Activated CD4-positive, alpha-beta memory T cell treated with anti-CD3 and anti-CD28 coated beads, Interleukin-2, amount 10 ng/mL, durations not matched to agents 7 days and 5 days (primary cell): ENCODE measurements at regions of chr10 and their contacts with region 1.

Region 1: GRCh38 chr10:80713398-80713928 is 175.8 kb downstream of the SH2D4B start:
- DNase-seq: no peak
- H3K4me3 Mint-ChIP-seq: no peak overlapping the region
- H3K27ac Mint-ChIP-seq: no peak overlapping the region
- H3K4me1 Mint-ChIP-seq: no peaks in the 10 kb centered on the region
- H3K27me3 Mint-ChIP-seq: peaks cover 2% of the 10 kb centered on the region

Region 2: DNA sequence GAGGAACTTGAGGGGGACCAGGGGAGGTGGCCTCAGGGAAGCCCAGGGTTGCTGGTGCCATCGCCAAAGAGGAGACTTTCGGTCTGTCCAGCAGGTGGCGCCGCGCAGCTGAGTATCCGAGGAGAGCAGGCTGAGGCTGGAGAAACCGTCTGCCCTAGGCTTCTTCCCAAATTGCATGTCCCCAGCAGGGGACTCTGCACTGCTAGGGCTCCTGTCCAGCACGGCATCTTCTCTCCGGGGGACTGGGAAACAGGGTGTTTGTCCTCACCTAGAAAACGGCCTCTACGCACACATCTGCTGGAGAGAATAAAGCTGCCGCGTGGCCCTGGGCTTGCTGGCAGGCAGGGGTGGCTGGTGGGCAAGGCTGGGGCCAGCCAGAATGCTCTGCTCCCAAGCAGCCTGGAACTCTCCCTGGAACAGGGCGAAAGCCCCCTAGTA is 13.8 kb before region 1 on chr10:
- CTCF ChIA-PET with region 1: interaction called, 11 read pairs
- POLR2A ChIA-PET with region 1: no interaction called
- DNase-seq: peak; percentile 73
- H3K4me3 Mint-ChIP-seq: no peak overlapping the region
- H3K27ac Mint-ChIP-seq: no peak overlapping the region
- H3K4me1 Mint-ChIP-seq: no peaks in the 10 kb centered on the region
- H3K27me3 Mint-ChIP-seq: no peaks in the 10 kb centered on the region